Activated B cell treated with CpG ODN at 0.5 μM for 24 hours (primary cell): ENCODE measurements at regions of chr1 and their contacts with region 1.

Region 1: DNA sequence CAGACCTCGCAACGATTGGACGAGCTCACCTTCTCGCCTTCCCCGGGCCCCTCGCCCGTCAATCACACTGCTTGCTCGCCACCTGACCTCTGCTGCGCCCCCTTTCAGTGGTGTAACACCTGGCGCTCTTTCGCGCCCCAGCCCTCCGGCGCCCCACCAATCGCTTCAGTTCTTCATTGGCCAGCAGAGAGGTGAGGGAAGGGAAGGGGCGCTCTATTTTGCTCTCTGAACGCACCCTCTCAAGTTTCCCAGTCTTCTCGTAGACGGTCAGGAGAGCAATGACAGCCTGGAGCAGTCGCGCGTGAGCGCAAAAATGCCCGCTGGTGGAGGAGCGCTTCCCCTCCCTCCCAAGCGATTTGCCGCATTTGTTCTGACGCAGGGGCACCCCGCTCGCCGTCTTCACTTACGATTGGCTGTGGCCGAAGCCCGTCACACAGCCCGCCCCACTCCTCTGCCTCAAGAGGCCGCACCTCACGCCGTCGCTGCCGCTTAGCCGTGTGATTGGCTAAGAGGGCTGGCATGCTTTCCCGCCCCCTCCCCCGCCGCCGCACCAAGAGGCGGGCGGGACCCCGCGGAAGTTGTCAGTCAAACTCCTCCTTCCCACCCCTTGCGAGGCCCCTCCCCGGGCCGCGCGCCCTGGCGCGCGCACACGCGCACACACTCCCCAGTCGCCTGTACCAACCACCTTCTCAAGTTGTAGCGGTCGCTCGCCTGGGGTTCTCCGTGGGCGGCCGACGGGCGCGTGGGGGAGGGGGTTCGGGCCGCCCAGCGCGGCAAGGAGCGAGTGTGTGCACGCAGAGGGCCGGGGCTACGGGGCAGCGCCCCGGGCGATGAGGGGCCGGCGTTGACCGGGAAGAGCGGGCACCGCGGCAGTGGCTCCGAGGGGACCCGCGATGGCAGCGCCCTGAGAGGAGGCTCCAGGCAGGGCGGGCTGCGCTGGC is at the start of gene PPP2R5A:
- DNase-seq: peak; percentile 96
- ATAC-seq: peak; percentile 86
- H3K4me3 Mint-ChIP-seq: peak within 1 kb of the TSS; percentile 96
- H3K27ac Mint-ChIP-seq: peak within 1 kb of the TSS; percentile 98
- H3K4me1 Mint-ChIP-seq: peaks cover 40% of the 10 kb centered on the region
- H3K27me3 Mint-ChIP-seq: no peaks in the 10 kb centered on the region
- CTCF ChIP-seq: no peak
- total RNA-seq, gene PPP2R5A: 27.9 and 31.6 TPM in 2 replicates

Region 2: DNA sequence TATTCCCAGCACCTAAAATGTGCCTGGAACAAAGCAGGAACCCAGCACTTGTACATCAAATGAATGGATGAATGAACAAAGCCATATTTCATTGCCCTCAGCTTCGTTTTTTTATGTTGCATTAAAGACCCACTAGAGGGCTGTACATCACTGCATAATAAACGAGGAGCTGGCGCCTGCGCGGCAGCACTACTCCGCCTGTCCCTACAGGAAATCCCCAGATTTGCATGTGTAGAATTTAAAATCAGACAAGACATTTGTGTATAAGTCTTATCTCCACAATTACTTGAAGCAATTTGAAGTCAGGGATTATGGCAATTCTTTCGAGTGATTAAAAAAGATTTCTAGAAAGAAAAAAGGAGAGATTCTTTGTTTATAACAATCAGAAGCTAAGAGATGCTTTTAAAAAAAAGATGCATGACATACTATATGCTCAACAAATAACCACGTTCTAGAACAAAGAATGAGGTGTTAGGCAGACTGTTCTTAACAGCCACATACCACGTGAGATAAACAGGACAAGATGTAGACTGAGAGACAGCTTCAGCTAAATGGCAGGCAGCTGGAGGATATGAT is 604.2 kb before region 1 on chr1:
- CTCF ChIA-PET with region 1: interaction called, 5 read pairs
- POLR2A ChIA-PET with region 1: interaction called, 5 read pairs
- intact Hi-C with region 1: loop called (anchors 2 kb)
- DNase-seq: peak; percentile 48
- ATAC-seq: peak; percentile 90
- H3K4me3 Mint-ChIP-seq: peak overlapping the region; percentile 26
- H3K27ac Mint-ChIP-seq: peak overlapping the region; percentile 85
- H3K4me1 Mint-ChIP-seq: peaks cover 41% of the 10 kb centered on the region
- H3K27me3 Mint-ChIP-seq: no peaks in the 10 kb centered on the region
- CTCF ChIP-seq: no peak

Region 3: DNA sequence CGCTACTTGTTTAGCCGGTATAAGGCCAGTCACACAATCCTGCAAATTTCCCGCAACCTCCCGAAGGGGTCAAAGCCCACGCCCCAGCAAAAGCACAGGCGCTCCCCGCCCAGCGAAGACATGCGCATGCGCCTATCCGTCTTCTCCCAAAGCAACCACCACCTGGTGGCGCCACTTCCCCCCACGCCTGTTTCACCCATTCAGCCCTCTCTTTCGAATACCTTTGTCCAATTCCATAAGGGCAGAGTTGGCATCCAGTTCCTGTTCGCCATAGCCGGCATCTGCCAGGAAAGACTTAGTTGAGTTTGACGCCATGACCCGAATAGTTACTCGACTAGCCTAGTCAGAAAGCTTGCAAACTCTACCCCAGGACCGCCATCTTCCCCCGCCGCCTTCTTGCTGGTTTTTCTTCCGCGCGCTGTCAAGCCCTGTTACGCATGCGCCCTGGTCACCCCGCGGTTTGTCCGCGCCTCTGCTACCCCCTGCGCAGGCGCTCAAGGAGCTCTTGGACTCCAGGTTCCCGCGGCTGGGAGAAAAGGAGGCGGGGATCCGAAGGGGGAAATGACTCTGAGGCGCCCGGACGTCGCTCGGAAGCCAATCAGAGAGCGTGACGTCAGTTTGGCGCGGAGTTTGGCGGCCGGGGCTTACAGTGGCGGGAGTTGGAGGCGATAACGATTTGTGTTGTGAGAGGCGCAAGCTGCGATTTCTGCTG is 249.7 kb before region 1 on chr1 and contains the starts of genes DTL and INTS7:
- CTCF ChIA-PET with region 1: interaction called, 5 read pairs
- POLR2A ChIA-PET with region 1: interaction called, 14 read pairs
- intact Hi-C with region 1: loop called (anchors 1 kb)
- DNase-seq: peak; percentile 93
- ATAC-seq: peak; percentile 86
- H3K4me3 Mint-ChIP-seq: peak within 1 kb of the TSS; percentile 99
- H3K27ac Mint-ChIP-seq: peak within 1 kb of the TSS; percentile 99
- H3K4me1 Mint-ChIP-seq: peaks cover 58% of the 10 kb centered on the region
- H3K27me3 Mint-ChIP-seq: no peaks in the 10 kb centered on the region
- CTCF ChIP-seq: peak; percentile 38
- total RNA-seq, gene DTL: 4.2 and 5.0 TPM in 2 replicates
- total RNA-seq, gene INTS7: 19.1 and 19.9 TPM in 2 replicates

Region 4: DNA sequence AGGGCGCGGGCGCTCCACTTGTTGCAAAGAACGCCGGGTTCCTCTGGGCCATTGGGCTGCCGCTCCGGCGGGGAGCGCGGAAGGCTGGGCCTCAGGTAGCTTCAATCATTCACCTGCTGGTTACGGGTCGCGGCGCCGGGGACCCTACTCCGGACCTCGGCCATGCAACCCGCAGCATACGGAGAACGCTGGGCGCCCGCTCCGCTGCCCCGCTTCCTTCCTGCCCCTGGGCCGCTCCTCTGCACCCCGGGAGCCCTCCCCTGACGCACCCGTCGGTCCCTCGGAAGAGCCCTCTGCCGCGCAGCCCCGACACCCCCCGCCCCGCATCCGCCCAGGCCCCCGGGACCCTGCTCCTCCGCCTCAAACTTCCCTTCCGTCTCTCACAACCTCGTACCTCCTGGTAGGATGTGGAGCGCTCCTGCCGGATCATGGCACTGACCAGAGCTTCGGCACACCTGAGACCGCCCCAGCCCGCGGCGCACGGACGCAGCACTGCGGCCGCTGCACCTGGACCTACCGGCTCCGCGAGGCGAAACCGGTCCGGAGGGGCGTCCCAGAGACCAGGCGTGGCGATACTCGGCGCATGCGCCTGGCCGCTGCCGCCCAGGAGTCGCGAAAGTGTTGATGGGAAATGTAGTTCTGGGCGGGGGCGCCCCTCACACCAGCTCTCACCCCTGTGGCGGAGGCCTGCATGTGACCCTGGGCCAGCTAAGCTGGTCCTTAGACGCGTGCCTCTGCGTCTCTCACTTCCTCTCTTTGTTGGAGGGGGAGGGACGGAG is 129.5 kb after region 1 on chr1 and contains the start of gene PACC1:
- CTCF ChIA-PET with region 1: no interaction called
- POLR2A ChIA-PET with region 1: interaction called, 7 read pairs
- intact Hi-C with region 1: loop called (anchors 1 kb)
- DNase-seq: peak; percentile 93
- ATAC-seq: peak; percentile 98
- H3K4me3 Mint-ChIP-seq: peak within 1 kb of the TSS; percentile 100
- H3K27ac Mint-ChIP-seq: peak within 1 kb of the TSS; percentile 96
- H3K4me1 Mint-ChIP-seq: peaks cover 43% of the 10 kb centered on the region
- H3K27me3 Mint-ChIP-seq: no peaks in the 10 kb centered on the region
- CTCF ChIP-seq: no peak
- total RNA-seq, gene PACC1: 15.2 and 20.0 TPM in 2 replicates

Region 5: GRCh38 chr1:212630158-212630900 is 345.3 kb after region 1 on chr1:
- CTCF ChIA-PET with region 1: no interaction called
- POLR2A ChIA-PET with region 1: interaction called, 10 read pairs
- intact Hi-C with region 1: no loop called
- DNase-seq: peak; percentile 58
- ATAC-seq: peak; percentile 98
- H3K4me3 Mint-ChIP-seq: no peak overlapping the region
- H3K27ac Mint-ChIP-seq: no peak overlapping the region
- H3K4me1 Mint-ChIP-seq: peaks cover 19% of the 10 kb centered on the region
- H3K27me3 Mint-ChIP-seq: peaks cover 12% of the 10 kb centered on the region
- CTCF ChIP-seq: peak; percentile 76

Region 6: DNA sequence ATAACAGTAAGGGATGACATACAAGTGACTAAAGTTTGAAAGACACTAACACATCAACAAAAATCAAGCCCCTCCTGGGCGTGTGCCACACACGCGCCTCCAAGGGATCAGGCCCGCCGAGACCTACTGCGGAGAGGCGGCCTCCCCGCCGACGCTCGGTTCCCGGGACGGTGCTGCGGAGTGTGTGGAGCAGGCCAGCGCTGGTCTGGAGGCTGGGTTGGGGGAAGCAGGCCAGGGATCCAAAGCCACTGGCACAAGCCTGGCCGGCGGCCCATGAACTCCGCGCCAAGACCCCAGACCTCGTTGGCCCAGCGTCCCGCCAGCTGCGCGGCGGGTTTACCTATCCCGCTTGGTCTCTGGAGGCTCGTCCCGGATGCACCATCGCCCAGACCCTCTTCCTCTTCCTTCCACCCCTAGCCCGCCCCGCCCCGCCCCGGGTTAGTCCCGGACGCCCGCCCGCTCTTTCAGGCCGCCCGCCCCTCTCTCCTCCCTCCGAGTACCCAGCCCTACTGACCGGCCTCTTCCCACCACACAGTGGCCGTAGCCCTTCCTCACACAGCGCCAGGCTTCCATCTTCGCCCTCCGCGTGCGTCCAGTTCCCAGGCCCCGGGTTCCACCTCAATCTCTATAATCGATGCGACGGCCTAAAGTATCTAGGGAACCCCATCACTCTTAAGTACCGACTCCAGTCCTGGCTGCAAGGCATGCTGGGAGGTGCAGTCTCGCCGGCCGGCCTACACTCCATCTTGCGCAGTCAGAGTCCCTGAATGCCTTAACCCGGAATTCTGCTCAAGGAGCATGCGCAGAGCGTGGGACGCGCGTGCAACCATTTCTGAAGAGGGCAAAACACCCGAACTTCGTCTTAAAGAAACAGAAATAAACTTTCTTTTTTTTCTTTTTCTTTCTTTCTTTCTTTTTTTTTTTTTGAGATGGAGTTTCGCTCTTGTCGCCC is 730.4 kb after region 1 on chr1 and contains the start of gene ANGEL2:
- CTCF ChIA-PET with region 1: no interaction called
- POLR2A ChIA-PET with region 1: no interaction called
- intact Hi-C with region 1: loop called (anchors 1 kb)
- DNase-seq: peak; percentile 87
- ATAC-seq: peak; percentile 95
- H3K4me3 Mint-ChIP-seq: peak within 1 kb of the TSS; percentile 100
- H3K27ac Mint-ChIP-seq: peak within 1 kb of the TSS; percentile 99
- H3K4me1 Mint-ChIP-seq: peaks cover 20% of the 10 kb centered on the region
- H3K27me3 Mint-ChIP-seq: no peaks in the 10 kb centered on the region
- CTCF ChIP-seq: no peak
- total RNA-seq, gene ANGEL2: 54.1 and 63.3 TPM in 2 replicates